Activated T-helper 1 cell treated with anti-CD3 and anti-CD28 coated beads, Interleukin-12 subunit alpha, Interleukin-12 subunit beta, Interleukin-2, Interleukin-4 antibody, amounts not matched to agents 30 ng/mL and 10 ng/mL and 1 ng/mL, durations not matched to agents 14 hours and 24 hours and 36 hours (primary cell): ENCODE measurements at regions of chr4 and their contacts with region 1.

Region 1: DNA sequence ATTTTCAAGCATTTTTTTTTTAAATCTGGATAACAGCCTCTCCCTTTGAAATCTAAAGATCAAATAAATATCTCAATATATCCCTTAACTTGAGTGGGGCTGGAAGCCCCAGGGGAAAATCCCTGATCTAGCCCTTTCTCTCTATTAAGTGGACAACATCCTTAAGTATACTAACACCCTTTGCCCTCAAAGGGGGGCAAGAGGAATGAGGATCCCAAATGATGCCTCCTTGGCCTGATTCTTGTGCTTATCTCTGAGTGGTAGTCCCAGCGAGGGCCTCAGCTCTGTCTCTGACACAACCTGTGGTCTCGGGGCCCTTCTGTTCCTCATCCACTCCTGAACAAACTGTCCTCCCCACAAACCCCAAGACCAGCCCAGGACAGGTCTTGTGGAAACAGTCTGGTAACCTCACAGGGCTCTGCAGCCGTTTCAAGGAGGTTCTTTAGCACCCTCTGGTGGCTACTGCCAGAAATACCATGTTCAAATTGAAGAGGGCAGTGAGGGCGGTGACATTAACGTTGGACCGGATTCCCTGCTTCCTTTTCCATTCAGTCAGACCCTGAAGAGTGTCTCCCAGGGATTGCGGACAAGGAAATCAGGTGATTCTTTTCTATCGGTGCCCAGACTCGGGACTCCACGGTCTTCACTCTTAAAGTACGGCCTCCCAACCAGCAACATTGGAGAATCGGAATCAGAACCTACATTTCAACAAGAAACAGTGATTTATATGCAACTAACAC is 12.9 kb downstream of the CXCL13 start:
- DNase-seq: peak; percentile 45
- H3K4me3 Mint-ChIP-seq: no peak overlapping the region
- H3K27ac Mint-ChIP-seq: peak overlapping the region; percentile 19
- H3K4me1 Mint-ChIP-seq: peaks cover 7% of the 10 kb centered on the region
- H3K27me3 Mint-ChIP-seq: peaks cover 24% of the 10 kb centered on the region

Region 2: DNA sequence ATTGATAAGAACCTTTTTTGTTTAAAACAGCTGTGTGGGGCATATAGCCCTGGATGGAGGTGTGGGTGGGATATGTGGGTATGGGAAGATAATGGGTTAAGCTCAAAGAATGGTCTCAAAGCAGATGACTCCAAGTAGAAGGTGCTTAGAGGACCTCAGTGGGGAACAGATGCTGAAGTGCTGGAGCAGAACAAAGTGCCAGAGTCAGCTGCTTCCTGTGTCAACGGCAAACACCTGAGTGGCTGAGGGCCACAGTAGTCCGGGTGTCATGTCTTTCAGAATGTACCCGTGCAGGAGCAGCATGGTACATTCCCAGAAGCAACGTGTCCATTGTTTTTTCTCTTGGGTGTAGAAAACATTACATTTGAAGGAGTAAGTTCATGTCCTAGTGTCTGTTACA is 250.9 kb before region 1 on chr4:
- intact Hi-C with region 1: loop called (anchors 1 kb)
- DNase-seq: no peak
- H3K4me3 Mint-ChIP-seq: no peak overlapping the region
- H3K27ac Mint-ChIP-seq: no peak overlapping the region
- H3K4me1 Mint-ChIP-seq: no peaks in the 10 kb centered on the region
- H3K27me3 Mint-ChIP-seq: peaks cover 3% of the 10 kb centered on the region

Region 3: DNA sequence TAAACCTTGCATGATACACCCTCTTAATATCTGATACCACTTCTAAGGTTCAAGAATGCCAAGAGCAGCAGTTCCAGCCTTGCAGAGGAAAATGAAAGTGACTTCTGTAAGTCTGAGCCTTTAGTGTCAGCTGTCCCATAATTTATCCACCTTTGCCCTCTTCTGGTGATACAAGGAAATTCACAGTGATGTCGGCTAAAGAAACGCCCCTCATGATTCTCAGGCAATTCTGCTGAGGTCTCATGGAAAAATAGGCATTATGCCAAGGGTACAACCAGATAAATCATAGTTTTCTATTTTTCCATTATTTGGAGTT is 185.2 kb before region 1 on chr4:
- intact Hi-C with region 1: loop called (anchors 1 kb)
- DNase-seq: peak; percentile 4
- H3K4me3 Mint-ChIP-seq: no peak overlapping the region
- H3K27ac Mint-ChIP-seq: no peak overlapping the region
- H3K4me1 Mint-ChIP-seq: peaks cover 8% of the 10 kb centered on the region
- H3K27me3 Mint-ChIP-seq: no peaks in the 10 kb centered on the region

Region 4: GRCh38 chr4:77600521-77601451 is 17.8 kb before region 1 on chr4:
- intact Hi-C with region 1: loop called (anchors 1 kb)
- DNase-seq: no peak
- H3K4me3 Mint-ChIP-seq: no peak overlapping the region
- H3K27ac Mint-ChIP-seq: no peak overlapping the region
- H3K4me1 Mint-ChIP-seq: peaks cover 33% of the 10 kb centered on the region
- H3K27me3 Mint-ChIP-seq: peaks cover 7% of the 10 kb centered on the region

Region 5: GRCh38 chr4:77669946-77670590 is 51.5 kb after region 1 on chr4:
- intact Hi-C with region 1: no loop called
- DNase-seq: no peak
- H3K4me3 Mint-ChIP-seq: no peak overlapping the region
- H3K27ac Mint-ChIP-seq: no peak overlapping the region
- H3K4me1 Mint-ChIP-seq: no peaks in the 10 kb centered on the region
- H3K27me3 Mint-ChIP-seq: no peaks in the 10 kb centered on the region